HepG2 (cell line): ENCODE measurements at regions of chr10 and their contacts with region 1.

Region 1: GRCh38 chr10:14959276-14960057 is at the start of gene MEIG1:
- DNase-seq: peak; percentile 92
- ATAC-seq: peak; percentile 96
- H3K4me3 ChIP-seq: peak within 1 kb of the TSS; percentile 67 to 80 (median 79)
- H3K27ac ChIP-seq: peak within 1 kb of the TSS; percentile 96
- H3K4me1 ChIP-seq: peaks cover 10% of the 10 kb centered on the region
- H3K27me3 ChIP-seq: no peaks in the 10 kb centered on the region
- CTCF ChIP-seq: no peak
- EP300 ChIP-seq: no peak
- POLR2A ChIP-seq: peak; percentile 51 to 70
- RAD21 ChIP-seq: peak; percentile 19; the same call in 1 of the 2 replicates
- total RNA-seq, gene MEIG1: not detected in 2 replicates

Region 2: GRCh38 chr10:14185316-14186045 is 774.0 kb before region 1 on chr10:
- CTCF ChIA-PET with region 1: no interaction called
- POLR2A ChIA-PET with region 1: interaction called, 14 read pairs
- in situ Hi-C with region 1: no loop called
- intact Hi-C with region 1: no loop called
- DNase-seq: peak; percentile 84
- ATAC-seq: peak; percentile 93
- H3K4me3 ChIP-seq: peak overlapping the region; percentile 15 to 31 (median 19); a peak in 5 of 6 replicates
- H3K27ac ChIP-seq: peak overlapping the region; percentile 75
- H3K4me1 ChIP-seq: peaks cover 21% of the 10 kb centered on the region
- H3K27me3 ChIP-seq: peaks cover 1 to 6% of the 10 kb centered on the region in 2 experiments; a peak in 3 of 5 replicates
- CTCF ChIP-seq: no peak
- EP300 ChIP-seq: no peak; a peak in 1 of 4 replicates
- POLR2A ChIP-seq: peak; percentile 89 to 100
- RAD21 ChIP-seq: peak; percentile 77

Region 3: GRCh38 chr10:14604181-14605142 is 355.0 kb before region 1 on chr10:
- CTCF ChIA-PET with region 1: no interaction called
- POLR2A ChIA-PET with region 1: no interaction called
- in situ Hi-C with region 1: no loop called
- intact Hi-C with region 1: loop called (anchors 10 kb)
- DNase-seq: no peak
- ATAC-seq: peak; percentile 79
- H3K4me3 ChIP-seq: peak overlapping the region; percentile 38 to 91 (median 74); a peak in 5 of 6 replicates
- H3K27ac ChIP-seq: no peak overlapping the region
- H3K4me1 ChIP-seq: peaks cover 71% of the 10 kb centered on the region
- H3K27me3 ChIP-seq: no peaks in the 10 kb centered on the region
- CTCF ChIP-seq: no peak
- EP300 ChIP-seq: no peak
- POLR2A ChIP-seq: peak in 1 of 2 experiments; percentile 73; a peak in 2 of 4 replicates
- RAD21 ChIP-seq: no peak

Region 4: GRCh38 chr10:14837757-14838581 is 121.5 kb before region 1 on chr10 and contains the starts of genes CDNF, HSPA14 and MSANTD7:
- CTCF ChIA-PET with region 1: no interaction called
- POLR2A ChIA-PET with region 1: interaction called, 24 read pairs
- in situ Hi-C with region 1: no loop called
- intact Hi-C with region 1: loop called (anchors 10 kb)
- DNase-seq: peak; percentile 98
- ATAC-seq: peak; percentile 96
- H3K4me3 ChIP-seq: peak within 1 kb of the TSS; percentile 79 to 98 (median 93)
- H3K27ac ChIP-seq: peak within 1 kb of the TSS; percentile 83
- H3K4me1 ChIP-seq: peaks cover 17% of the 10 kb centered on the region
- H3K27me3 ChIP-seq: no peaks in the 10 kb centered on the region; a peak in 1 of 5 replicates
- CTCF ChIP-seq: 0 out of 2 replicates have a peak, but pooled peaks have one; percentile 13
- EP300 ChIP-seq: peak; percentile 18 to 19; a peak in 1 of 4 replicates
- POLR2A ChIP-seq: peak; percentile 76 to 83
- RAD21 ChIP-seq: peak; percentile 58
- total RNA-seq, gene CDNF: 0.33 and 0.38 TPM in 2 replicates
- total RNA-seq, gene HSPA14: 29.8 and 42.9 TPM in 2 replicates
- total RNA-seq, gene MSANTD7: 16.7 and 22.8 TPM in 2 replicates

Region 5: DNA sequence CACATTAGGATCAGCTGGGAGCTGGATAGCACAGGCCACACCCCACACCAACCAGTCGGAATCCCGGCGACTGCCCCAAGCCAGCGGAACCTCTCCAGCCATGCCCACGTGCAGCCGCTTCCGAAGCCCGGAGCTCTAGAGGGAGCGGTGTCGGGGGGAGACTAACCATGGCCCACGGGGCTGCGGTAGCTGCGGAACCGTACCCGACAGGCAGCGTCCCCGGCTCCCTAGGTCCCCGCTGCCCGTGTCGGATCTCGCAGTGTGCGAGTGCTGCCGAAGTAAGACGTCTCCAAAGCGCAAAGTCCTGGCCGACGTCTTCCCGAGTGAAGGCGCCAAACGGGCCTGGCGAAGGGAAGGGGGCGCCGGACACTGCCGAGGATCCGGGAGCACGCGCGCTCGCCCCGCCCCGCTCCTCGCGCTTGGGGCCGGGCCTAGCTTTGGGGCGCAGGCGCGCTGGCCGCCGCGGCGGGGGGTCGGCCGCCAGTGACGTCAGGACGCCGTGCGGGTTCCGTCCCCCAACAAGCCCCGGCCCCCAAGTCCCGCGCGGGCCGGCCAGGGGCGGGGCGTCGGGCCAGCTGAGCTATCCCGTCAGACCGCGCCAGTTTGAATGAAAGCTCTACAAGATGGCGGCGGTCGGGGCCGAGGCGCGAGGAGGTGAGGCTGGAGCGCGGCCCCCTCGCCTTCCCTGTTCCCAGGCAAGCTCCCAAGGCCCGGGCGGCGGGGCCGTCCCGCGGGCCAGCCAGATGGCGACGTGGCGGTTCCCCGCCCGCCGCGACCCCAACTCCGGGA is 81.0 kb before region 1 on chr10 and contains the start of gene SUV39H2:
- CTCF ChIA-PET with region 1: no interaction called
- POLR2A ChIA-PET with region 1: interaction called, 20 read pairs
- in situ Hi-C with region 1: no loop called
- intact Hi-C with region 1: loop called (anchors 10 kb)
- DNase-seq: peak; percentile 87
- ATAC-seq: peak; percentile 91
- H3K4me3 ChIP-seq: peak within 1 kb of the TSS; percentile 76 to 98 (median 91)
- H3K27ac ChIP-seq: peak within 1 kb of the TSS; percentile 97
- H3K4me1 ChIP-seq: peaks cover 38% of the 10 kb centered on the region
- H3K27me3 ChIP-seq: no peaks in the 10 kb centered on the region; a peak in 1 of 5 replicates
- CTCF ChIP-seq: peak; percentile 53
- EP300 ChIP-seq: no peak
- POLR2A ChIP-seq: peak; percentile 85 to 94
- RAD21 ChIP-seq: 0 out of 2 replicates have a peak, but pooled peaks have one; percentile 21
- total RNA-seq, gene SUV39H2: 44.3 and 68.8 TPM in 2 replicates

Region 6: DNA sequence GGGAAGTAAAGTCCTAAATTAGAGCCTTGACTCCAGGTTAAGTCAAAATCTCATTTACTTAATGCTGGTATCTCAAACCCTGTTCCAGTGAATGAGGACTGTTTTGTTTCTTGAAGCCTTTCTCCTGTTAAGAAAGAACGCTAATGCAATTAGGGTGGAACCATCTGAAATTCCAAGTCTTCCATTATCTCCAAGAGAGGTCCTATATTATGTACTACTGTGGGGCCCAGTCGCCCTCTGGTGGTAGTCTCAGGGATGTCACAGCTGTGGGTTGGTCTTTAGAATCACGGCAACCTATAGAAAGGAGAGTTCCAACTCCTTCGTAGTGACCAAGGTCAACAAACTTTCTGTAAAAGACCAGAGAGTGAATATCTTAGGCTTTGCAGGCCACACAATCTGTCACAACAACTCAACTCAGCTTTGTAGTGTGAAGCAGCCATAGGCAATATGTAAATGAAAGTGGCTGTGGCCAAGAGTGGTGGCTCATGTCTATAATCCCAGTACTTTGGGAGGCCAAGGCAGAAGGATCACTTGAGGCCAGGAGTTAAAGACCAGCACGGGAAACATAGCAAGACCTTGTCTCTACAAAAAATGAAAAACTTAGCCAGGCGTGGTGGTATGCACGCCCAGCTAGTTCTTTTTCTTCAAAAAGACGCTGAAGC is 147.0 kb after region 1 on chr10:
- CTCF ChIA-PET with region 1: no interaction called
- POLR2A ChIA-PET with region 1: interaction called, 3 read pairs
- in situ Hi-C with region 1: loop called (anchors 10 kb)
- intact Hi-C with region 1: loop called (anchors 5 kb)
- DNase-seq: peak; percentile 66
- ATAC-seq: peak; percentile 90
- H3K4me3 ChIP-seq: no peak overlapping the region
- H3K27ac ChIP-seq: no peak overlapping the region
- H3K4me1 ChIP-seq: peaks cover 20% of the 10 kb centered on the region
- H3K27me3 ChIP-seq: no peaks in the 10 kb centered on the region
- CTCF ChIP-seq: peak; percentile 88
- EP300 ChIP-seq: no peak
- POLR2A ChIP-seq: no peak
- RAD21 ChIP-seq: peak; percentile 58; the same call in 1 of the 2 replicates